AG04450 (cell line): ENCODE measurements at regions of chr22 and their contacts with region 1.

Region 1: GRCh38 chr22:38681784-38682335 is at the start of gene TOMM22:
- DNase-seq: no peak
- H3K4me3 ChIP-seq: peak within 1 kb of the TSS; percentile 96
- H3K27ac ChIP-seq: peak within 1 kb of the TSS; percentile 39
- H3K27me3 ChIP-seq: no peaks in the 10 kb centered on the region
- CTCF ChIP-seq: peak; percentile 65
- polyA plus RNA-seq, gene TOMM22: 55.9 and 68.9 TPM in 2 replicates

Region 2: GRCh38 chr22:38694049-38694448 is 12.2 kb after region 1 on chr22:
- CTCF ChIA-PET with region 1: interaction called, 22 read pairs
- POLR2A ChIA-PET with region 1: interaction called, 11 read pairs
- DNase-seq: no peak
- H3K4me3 ChIP-seq: no peak overlapping the region
- H3K27ac ChIP-seq: no peak overlapping the region
- H3K27me3 ChIP-seq: no peaks in the 10 kb centered on the region
- CTCF ChIP-seq: no peak

Region 3: DNA sequence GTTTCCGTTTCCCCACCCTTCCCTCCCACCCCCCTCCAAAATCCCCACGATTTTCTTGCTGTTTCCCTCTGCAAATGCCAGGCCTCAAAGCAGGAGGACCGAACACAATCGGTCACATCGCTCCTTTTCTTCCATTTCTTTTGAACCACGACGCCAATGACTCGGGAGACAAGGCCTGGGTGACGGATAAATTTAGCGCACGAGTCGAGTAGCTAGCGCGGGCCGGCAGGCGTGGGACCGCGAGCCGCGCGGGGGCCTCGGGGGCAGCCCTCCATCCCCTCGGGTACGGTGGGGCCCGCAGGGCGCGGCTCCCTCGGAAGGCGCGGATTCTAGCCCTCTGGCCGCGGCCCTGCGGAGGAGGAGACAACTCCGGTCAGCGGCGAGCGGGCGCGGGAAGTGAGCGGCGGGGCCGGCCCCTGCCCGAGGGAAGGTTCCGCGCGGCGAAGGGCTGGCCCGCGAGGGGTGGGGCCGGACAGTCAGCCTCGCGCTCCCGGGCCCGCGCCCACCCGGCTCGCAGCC is 18.5 kb after region 1 on chr22:
- CTCF ChIA-PET with region 1: interaction called, 22 read pairs
- POLR2A ChIA-PET with region 1: interaction called, 11 read pairs
- DNase-seq: no peak
- H3K4me3 ChIP-seq: peak overlapping the region; percentile 85
- H3K27ac ChIP-seq: peak overlapping the region; percentile 78
- H3K27me3 ChIP-seq: no peaks in the 10 kb centered on the region
- CTCF ChIP-seq: no peak

Region 4: DNA sequence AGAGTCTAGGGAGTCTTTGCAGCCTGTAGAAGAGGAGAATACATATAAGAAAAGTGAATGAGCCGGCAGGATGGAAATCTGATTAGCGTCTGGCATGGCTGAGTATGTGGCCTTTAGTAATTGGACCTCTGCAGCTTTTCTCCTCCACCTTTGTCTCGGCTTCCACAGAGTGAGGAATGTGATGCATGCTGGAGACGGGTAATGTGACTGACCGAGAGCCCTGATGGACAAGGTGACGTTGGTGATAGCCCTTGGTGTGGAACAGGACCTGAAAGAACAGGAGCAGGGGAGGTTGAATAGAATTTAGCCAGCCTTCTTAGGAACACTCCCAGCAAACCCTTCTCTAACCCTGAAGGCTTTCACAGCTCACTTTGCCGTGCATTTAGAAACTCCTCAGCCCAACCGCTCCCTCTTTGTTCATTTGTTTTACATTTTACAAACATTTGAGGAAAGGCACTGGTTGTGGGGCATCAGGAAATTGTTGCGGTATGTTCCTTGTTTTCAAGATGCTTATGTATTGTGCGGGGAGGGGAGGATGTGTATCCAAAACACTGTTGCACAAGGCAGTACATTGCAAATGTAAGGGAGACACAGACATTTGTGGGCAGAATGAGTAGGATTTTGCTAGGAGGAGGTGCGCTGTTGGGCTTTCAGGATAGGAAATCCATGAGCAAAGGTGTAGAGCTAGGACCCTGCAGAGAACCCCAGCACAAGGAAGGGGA is 30.8 kb after region 1 on chr22:
- CTCF ChIA-PET with region 1: no interaction called
- POLR2A ChIA-PET with region 1: no interaction called
- DNase-seq: no peak
- H3K4me3 ChIP-seq: no peak overlapping the region
- H3K27ac ChIP-seq: no peak overlapping the region
- H3K27me3 ChIP-seq: no peaks in the 10 kb centered on the region
- CTCF ChIP-seq: no peak